Calu3 (cell line): ENCODE measurements at regions of chr9 and their contacts with region 1.

Region 1: GRCh38 chr9:106717686-106718085 is 145.3 kb upstream of the ZNF462 start:
- DNase-seq: peak; percentile 20
- H3K4me3 Mint-ChIP-seq: no peak overlapping the region
- H3K27ac Mint-ChIP-seq: peak overlapping the region; percentile 81
- H3K4me1 Mint-ChIP-seq: peaks cover 22% of the 10 kb centered on the region
- H3K27me3 Mint-ChIP-seq: no peaks in the 10 kb centered on the region
- CTCF ChIP-seq: no peak

Region 2: DNA sequence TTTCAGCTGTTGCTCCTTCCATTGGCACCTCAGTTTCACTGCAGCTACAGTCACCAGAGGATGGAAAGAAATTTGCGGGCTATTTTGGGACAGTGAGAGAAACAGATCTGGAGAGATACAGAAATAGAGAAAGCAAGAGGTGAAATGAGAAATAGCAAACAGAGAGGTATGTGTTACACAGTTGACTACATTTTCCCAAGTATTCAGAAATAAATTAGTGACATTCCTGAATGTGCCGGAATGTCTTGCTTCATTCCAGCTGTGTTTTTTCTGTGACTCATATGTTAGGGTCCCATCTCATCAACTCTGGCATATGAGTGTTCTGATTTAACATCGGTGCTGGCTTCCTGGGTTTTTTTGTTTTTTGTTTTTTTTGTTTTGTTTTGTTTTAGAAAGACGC is 81.5 kb after region 1 on chr9:
- CTCF ChIA-PET with region 1: no interaction called
- intact Hi-C with region 1: loop called (anchors 10 kb)
- DNase-seq: no peak
- H3K4me3 Mint-ChIP-seq: no peak overlapping the region
- H3K27ac Mint-ChIP-seq: no peak overlapping the region
- H3K4me1 Mint-ChIP-seq: peaks cover 16% of the 10 kb centered on the region
- H3K27me3 Mint-ChIP-seq: peaks cover 40% of the 10 kb centered on the region
- CTCF ChIP-seq: no peak